Left colon (tissue), 2 donors: ENCODE measurements at regions of chr11 and their contacts with region 1.

Region 1: GRCh38 chr11:44538375-44539054 is 26.9 kb upstream of the CD82 start:
- DNase-seq: peak in 1 of 2 donors; percentile 71
- ATAC-seq: peak; percentile 90

Region 2: DNA sequence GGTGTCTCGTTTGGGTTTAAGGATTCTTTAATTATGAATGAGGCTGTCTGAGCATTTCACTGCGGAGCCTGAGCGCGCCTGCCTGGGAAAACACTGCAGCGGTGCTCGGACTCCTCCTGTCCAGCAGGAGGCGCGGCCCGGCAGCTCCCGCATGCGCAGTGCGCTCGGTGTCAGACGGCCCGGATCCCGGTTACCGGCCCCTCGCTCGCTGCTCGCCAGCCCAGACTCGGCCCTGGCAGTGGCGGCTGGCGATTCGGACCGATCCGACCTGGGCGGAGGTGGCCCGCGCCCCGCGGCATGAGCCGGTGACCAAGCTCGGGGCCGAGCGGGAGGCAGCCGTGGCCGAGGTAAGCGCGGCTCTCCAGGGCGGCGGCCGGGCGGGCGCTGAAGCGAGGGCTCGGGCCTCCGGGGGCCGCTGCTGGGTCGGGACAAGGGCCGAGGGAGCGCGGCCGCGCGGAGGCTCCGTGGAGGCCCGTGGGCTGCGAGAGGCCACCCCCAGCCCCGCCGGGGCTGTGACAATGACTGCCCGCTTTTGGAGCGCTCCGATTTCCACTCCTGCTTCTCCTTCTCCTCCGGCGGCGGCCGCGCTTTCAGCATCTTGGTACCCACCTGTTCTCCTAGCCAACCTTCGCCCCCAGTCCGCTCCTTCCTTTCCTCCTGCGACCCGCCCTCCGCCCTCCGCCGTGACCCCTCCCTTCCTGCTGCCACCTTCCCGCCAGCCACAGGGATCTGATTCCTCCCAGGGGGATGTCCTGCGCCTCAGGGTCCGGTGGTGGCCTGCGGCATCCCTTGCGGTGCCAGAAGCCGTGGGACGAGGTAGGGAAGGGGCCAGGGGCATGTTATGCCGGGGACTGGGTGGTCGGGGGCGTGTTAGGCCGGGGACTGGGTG is 442.8 kb before region 1 on chr11 and contains the start of gene EXT2:
- intact Hi-C with region 1: loop called in 1 of 2 experiments (anchors 10 kb)
- DNase-seq: peak; percentile 83 to 90
- ATAC-seq: peak; percentile 93
- total RNA-seq, gene EXT2: 48.5 to 63.9 TPM

Region 3: DNA sequence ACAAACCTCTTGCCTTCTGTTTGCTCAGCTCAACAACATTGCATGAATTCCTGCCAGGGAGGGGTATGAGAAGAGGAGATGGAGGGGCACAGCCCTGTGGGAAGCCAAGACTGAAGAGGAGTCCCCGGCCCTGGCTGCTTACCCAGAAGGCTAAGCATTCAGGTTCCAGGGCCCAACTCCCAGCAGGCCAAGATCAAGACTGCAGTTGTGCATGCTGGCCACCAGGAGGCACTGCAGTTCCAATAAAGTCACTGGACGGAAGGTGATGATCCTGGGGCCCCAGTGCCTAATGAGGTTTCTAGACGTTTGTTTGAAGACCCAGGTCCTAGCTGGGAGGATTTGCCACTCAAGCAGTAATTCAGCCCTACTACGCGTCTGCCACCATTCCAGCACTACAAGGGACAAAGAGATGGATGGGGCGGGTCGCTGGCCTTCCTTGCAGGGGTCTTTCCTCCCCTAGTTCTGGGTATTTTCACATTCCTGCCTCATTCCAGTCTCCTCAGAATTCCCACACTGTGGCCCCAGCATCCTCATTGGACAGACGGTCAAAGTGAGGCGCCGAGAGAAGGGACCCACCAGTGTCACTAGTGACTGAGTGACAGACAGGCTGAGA is 252.1 kb before region 1 on chr11:
- intact Hi-C with region 1: loop called (anchors 2 to 5 kb)
- DNase-seq: peak in 1 of 2 donors; percentile 38
- ATAC-seq: peak; percentile 65